PC-3 (cell line): ENCODE measurements at regions of chr5 and their contacts with region 1.

Region 1: GRCh38 chr5:178273041-178273440 is 40.4 kb upstream of the PHYKPL start:
- DNase-seq: no peak
- ATAC-seq: no peak
- H3K4me3 ChIP-seq: no peak overlapping the region
- H3K27ac ChIP-seq: no peak overlapping the region
- H3K4me1 ChIP-seq: no peaks in the 10 kb centered on the region
- H3K27me3 ChIP-seq: peaks cover 20% of the 10 kb centered on the region
- CTCF ChIP-seq: no peak

Region 2: GRCh38 chr5:178194026-178194425 is 79.0 kb before region 1 on chr5:
- CTCF ChIA-PET with region 1: no interaction called
- POLR2A ChIA-PET with region 1: interaction called, 11 read pairs
- intact Hi-C with region 1: no loop called
- DNase-seq: no peak
- ATAC-seq: no peak
- H3K4me3 ChIP-seq: no peak overlapping the region
- H3K27ac ChIP-seq: no peak overlapping the region
- H3K4me1 ChIP-seq: peaks cover 8% of the 10 kb centered on the region
- H3K27me3 ChIP-seq: no peaks in the 10 kb centered on the region
- CTCF ChIP-seq: no peak

Region 3: DNA sequence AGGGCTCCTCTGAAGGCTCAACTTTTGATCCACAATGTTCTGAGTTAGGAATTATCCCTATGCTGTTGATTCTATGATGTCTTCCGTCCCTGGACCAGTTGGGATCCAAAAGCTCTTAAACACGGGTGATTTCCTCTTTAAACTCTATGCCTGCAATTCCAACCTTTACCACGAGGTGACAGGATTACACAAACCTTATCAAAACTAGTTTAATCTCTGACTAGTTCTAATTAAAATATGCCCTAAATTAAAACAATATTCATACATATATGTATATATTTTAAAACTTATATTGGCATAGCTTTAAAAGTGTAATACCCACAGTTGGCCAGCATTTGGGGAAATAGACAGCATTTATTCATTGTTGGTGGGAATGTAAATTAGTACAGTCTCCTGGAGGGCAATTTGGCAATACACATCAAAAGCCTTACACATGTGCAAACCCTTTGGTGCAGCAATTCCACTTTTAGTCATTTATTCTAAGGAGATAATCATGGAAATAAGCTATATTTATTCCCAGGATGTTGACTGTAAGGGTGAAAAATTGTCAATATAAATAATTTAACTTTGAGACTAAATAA is 11.1 kb after region 1 on chr5:
- CTCF ChIA-PET with region 1: no interaction called
- POLR2A ChIA-PET with region 1: no interaction called
- intact Hi-C with region 1: no loop called
- DNase-seq: peak; percentile 73
- ATAC-seq: no peak
- H3K4me3 ChIP-seq: no peak overlapping the region
- H3K27ac ChIP-seq: no peak overlapping the region
- H3K4me1 ChIP-seq: peaks cover 9% of the 10 kb centered on the region; the same call in 1 of the 2 replicates
- H3K27me3 ChIP-seq: peaks cover 26% of the 10 kb centered on the region
- CTCF ChIP-seq: peak; percentile 80